Tibial artery (tissue), 4 donors: ENCODE measurements at regions of chr20 and their contacts with region 1.

Region 1: GRCh38 chr20:63254536-63255384 is 497 bp upstream of the NKAIN4 start:
- DNase-seq: no peak
- H3K4me3 ChIP-seq: no peak overlapping the region
- H3K27ac ChIP-seq: no peak overlapping the region
- H3K4me1 ChIP-seq: peaks cover 0 to 22% (median 16%) of the 10 kb centered on the region in 4 donors
- H3K27me3 ChIP-seq: peaks cover 0 to 92% of the 10 kb centered on the region in 2 donors
- CTCF ChIP-seq: no peak

Region 2: DNA sequence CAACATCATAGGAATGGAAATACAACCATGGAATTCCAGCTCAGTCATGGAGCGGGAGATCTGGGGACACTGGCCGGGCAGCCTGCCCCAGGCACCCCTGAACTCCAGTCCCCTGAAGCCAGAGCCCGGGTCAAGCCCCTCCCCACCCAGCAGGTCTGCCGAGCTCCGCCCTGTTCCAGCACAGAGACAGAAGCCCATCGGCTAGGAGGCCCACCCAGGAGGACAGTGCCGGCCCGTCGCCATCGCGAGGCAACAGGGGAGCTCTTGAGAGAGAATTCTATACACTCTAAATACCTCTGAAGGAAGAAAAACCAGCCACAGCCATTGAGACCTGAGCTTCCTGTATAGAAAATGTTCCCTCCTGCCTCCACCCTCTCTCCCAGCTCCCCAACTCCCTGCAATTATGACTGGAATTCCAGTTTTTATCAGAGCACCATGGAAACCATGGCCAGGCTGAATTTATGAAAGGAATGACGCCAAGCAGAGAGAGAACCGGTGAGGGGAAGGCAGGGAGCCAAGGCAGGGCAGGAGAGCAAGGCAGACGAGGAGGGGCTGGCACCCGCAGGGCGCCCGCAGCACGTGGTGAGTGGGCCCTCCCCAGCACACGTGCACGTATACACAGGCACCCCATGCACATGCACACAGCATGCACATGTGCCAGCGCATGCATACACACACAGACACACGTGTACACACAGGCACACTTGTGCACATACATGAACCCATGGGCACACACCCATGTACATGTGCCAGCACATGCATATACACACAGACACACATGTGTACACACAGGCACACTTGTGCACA is 486.1 kb before region 1 on chr20:
- intact Hi-C with region 1: loop called (anchors 5 kb)
- DNase-seq: no peak
- H3K4me3 ChIP-seq: no peak overlapping the region
- H3K27ac ChIP-seq: no peak overlapping the region
- H3K4me1 ChIP-seq: peaks cover 0 to 7% (median 0%) of the 10 kb centered on the region in 4 donors
- H3K27me3 ChIP-seq: peaks cover 0 to 89% of the 10 kb centered on the region in 2 donors
- CTCF ChIP-seq: no peak

Region 3: DNA sequence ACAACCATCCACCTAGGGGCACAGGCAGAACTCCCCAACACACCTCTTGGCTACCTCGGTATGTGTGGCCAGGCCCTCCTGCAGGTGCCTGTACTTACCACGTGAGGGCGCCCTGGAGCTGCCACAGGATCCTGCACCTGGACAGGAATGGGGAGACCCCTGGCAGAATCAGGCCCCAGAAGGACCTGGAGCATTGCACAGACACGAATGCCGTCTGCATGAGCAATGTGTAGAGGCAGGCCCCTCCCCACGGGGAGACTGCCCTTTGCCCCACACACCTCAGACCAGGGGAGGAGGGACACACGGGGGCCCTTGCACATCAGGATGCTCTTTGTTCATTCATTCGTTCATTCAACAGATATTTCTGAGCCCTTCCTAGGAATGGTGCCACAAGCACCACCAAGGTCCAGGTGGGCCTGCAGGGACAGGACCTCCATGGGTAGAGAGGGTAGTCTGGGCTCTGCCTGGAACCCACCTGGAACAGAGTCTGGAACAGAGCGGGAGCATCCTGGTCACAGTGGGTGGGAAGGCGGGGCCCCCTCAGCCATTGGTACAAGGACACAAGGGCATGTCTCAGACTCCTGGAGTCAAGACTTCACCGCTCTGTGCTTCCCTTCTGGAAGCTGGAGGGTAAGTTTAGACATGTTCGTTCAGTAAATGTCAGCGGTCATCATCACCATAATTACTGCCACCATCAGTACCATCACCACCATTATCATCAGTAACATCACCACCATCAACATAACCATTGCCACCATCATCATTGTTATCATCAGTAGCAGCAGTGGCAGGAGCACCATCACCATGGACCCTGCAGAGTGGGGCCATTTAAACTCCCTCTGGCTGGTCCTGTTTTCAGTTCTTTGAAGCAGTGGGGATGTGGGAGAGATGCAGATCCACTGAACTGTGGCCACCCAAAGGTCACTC is 71.1 kb before region 1 on chr20:
- intact Hi-C with region 1: no loop called
- DNase-seq: no peak
- H3K4me3 ChIP-seq: no peak overlapping the region
- H3K27ac ChIP-seq: no peak overlapping the region
- H3K4me1 ChIP-seq: peaks cover 0 to 10% (median 9%) of the 10 kb centered on the region in 4 donors
- H3K27me3 ChIP-seq: peaks cover 0 to 57% of the 10 kb centered on the region in 2 donors
- CTCF ChIP-seq: peak; percentile 30 to 49